Mammary epithelial cell (primary cell): ENCODE measurements at regions of chr4 and their contacts with region 1.

Region 1: GRCh38 chr4:133320576-133321170 is 171.6 kb downstream of the PCDH10 start:
- DNase-seq: peak; percentile 11
- H3K4me3 ChIP-seq: no peak overlapping the region
- H3K27ac ChIP-seq: no peak overlapping the region
- H3K4me1 ChIP-seq: no peaks in the 10 kb centered on the region
- H3K27me3 ChIP-seq: no peaks in the 10 kb centered on the region
- CTCF ChIP-seq: peak; percentile 69 to 74

Region 2: GRCh38 chr4:132839070-132839469 is 481.6 kb before region 1 on chr4:
- CTCF ChIA-PET with region 1: no interaction called
- dilution Hi-C with region 1: no loop called
- in situ Hi-C with region 1: no loop called
- intact Hi-C with region 1: no loop called
- DNase-seq: no peak
- H3K4me3 ChIP-seq: no peak overlapping the region
- H3K27ac ChIP-seq: no peak overlapping the region
- H3K4me1 ChIP-seq: no peaks in the 10 kb centered on the region
- H3K27me3 ChIP-seq: no peaks in the 10 kb centered on the region
- CTCF ChIP-seq: no peak

Region 3: GRCh38 chr4:133347409-133347808 is 26.7 kb after region 1 on chr4:
- CTCF ChIA-PET with region 1: no interaction called
- dilution Hi-C with region 1: no loop called
- in situ Hi-C with region 1: no loop called
- intact Hi-C with region 1: no loop called
- DNase-seq: no peak
- H3K4me3 ChIP-seq: no peak overlapping the region
- H3K27ac ChIP-seq: no peak overlapping the region
- H3K4me1 ChIP-seq: no peaks in the 10 kb centered on the region
- H3K27me3 ChIP-seq: no peaks in the 10 kb centered on the region
- CTCF ChIP-seq: no peak

Region 4: GRCh38 chr4:133483600-133484246 is 163.1 kb after region 1 on chr4:
- CTCF ChIA-PET with region 1: no interaction called
- dilution Hi-C with region 1: no loop called
- in situ Hi-C with region 1: no loop called
- intact Hi-C with region 1: loop called (anchors 1 kb)
- DNase-seq: peak; percentile 16
- H3K4me3 ChIP-seq: no peak overlapping the region
- H3K27ac ChIP-seq: no peak overlapping the region
- H3K4me1 ChIP-seq: no peaks in the 10 kb centered on the region
- H3K27me3 ChIP-seq: no peaks in the 10 kb centered on the region
- CTCF ChIP-seq: peak; percentile 47 to 79